ENCODE measurements at regions of chr15 and their contacts with region 1.

Region 1: DNA sequence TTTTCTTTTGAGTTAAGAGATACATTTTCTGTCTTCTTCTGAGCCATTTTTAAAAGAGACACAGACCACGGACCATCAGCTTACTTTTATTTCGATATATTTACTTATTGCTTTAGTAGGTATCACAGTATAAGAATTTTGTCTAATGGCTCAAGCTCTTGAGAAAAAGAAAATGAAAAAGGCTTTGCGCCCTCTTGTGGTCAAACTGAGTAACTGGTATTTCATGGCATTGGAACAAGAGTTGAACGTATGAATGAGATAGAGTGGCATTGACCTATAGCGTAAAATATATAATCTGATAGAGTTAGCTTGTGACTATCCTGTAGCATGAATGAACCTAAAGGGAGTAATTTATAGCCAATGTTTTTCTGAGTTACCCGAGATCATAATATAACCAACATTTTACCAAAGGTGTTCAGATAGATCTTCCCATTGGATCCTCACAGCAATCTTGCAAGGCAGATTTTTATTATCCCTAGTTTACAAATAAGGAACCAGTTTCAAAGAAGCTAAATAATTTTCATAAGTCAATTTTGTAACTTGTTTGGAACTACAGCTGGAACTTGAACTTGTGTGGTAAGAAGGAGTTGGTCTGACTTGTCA is 154.6 kb downstream of the POLR2M start:
- DNase-seq: no peak
- ATAC-seq: no peak; the same call in 1 of the 2 replicates
- H3K4me3 Mint-ChIP-seq: no peak overlapping the region
- H3K27ac Mint-ChIP-seq: no peak overlapping the region
- H3K4me1 Mint-ChIP-seq: no peaks in the 10 kb centered on the region
- H3K27me3 Mint-ChIP-seq: no peaks in the 10 kb centered on the region; the same call in 1 of the 2 replicates
- CTCF ChIP-seq: peak; percentile 69

Region 2: DNA sequence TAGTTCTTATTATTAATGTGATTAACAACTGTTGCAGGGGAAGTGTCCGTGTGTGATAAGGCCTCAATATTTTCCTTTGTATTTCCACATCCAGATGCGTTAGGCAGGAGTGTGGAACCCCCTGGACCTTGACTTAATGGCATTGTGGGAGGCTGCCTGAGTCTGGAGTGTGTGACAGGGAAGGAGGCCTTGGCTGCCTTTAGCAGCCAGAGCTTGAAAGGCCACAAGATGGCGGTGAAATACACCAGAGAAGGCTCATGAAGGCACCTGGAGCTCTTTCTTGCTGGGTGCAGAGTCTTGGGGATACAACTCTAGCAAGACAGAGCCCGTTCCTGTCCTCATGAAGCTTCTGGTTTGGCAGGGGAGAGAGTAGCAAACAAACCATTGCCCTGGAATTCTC is 117.7 kb before region 1 on chr15:
- CTCF ChIA-PET with region 1: interaction called, 26 read pairs
- POLR2A ChIA-PET with region 1: no interaction called
- DNase-seq: peak; percentile 32
- ATAC-seq: peak; percentile 63
- H3K4me3 Mint-ChIP-seq: no peak overlapping the region
- H3K27ac Mint-ChIP-seq: no peak overlapping the region
- H3K4me1 Mint-ChIP-seq: peaks cover 27% of the 10 kb centered on the region
- H3K27me3 Mint-ChIP-seq: peaks cover 2% of the 10 kb centered on the region; the same call in 1 of the 2 replicates
- CTCF ChIP-seq: no peak

Region 3: GRCh38 chr15:57903626-57904025 is 42.5 kb after region 1 on chr15:
- CTCF ChIA-PET with region 1: no interaction called
- POLR2A ChIA-PET with region 1: no interaction called
- DNase-seq: no peak
- ATAC-seq: no peak
- H3K4me3 Mint-ChIP-seq: no peak overlapping the region
- H3K27ac Mint-ChIP-seq: no peak overlapping the region
- H3K4me1 Mint-ChIP-seq: no peaks in the 10 kb centered on the region
- H3K27me3 Mint-ChIP-seq: no peaks in the 10 kb centered on the region
- CTCF ChIP-seq: no peak

Measured in WTC11 (cell line).